Cardiac septum (tissue), 1 donor: ENCODE measurements at regions of chr1 and their contacts with region 1.

Region 1: GRCh38 chr1:153532769-153533599 is 2.8 kb downstream of the S100A6 start:
- DNase-seq: peak; percentile 96

Region 2: DNA sequence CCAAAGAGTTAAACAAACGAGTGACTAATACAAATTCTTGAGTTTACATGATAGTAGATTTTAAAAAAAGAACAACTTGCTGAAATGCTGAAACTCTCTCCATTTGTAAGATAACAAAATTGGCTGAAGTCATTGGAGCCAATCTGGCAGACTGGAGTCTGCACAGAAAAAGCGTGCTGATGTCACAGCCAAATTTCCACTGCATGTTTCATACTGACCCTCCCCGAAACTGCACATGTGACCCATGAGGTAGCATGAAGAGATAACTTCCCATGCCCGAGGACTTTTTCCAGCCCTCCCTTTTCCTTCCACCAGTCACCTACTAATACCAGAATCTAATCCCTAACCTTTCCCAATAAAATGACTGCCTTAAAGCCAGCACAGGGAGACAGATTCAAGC is 331.0 kb before region 1 on chr1:
- intact Hi-C with region 1: no loop called
- DNase-seq: no peak

Region 3: GRCh38 chr1:153617675-153618074 is 84.7 kb after region 1 on chr1:
- intact Hi-C with region 1: loop called (anchors 5 kb)
- DNase-seq: no peak

Region 4: DNA sequence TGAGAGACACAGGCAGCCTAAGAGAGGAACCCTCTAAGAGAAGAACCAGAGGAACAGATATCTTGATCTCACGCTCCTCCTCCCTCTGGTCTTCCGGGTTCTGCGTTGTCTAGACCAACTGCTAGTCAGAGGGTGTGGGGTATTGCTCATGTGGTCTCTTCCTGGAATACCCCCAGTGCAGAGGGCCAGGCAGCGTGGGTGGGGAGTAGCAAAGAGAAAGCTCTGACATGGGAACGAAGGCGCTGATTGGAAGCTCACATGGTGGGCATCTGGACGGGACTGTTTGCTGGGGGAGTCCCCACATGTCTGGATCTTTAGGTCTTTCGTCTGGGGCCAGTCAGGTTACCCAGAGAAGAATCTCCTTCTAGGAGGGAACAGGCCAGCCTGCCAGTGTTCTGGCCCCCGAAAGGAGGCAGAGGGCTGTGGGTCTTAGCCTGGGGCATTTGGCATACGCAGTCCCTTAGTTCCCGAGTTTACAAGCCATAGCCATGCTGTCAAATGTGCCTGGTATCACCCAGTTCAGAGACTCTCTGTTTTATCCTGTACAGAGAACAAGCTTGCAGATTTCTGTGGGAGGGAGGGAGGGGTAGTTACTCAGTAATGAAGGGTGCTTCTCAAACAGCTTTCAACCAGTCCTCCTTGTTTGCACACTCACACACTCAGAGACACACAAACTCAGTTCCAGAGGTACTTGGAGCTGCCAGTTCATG is 853.8 kb after region 1 on chr1:
- intact Hi-C with region 1: no loop called
- DNase-seq: no peak